CD4-positive, alpha-beta memory T cell (primary cell): ENCODE measurements at regions of chr2 and their contacts with region 1.

Region 1: DNA sequence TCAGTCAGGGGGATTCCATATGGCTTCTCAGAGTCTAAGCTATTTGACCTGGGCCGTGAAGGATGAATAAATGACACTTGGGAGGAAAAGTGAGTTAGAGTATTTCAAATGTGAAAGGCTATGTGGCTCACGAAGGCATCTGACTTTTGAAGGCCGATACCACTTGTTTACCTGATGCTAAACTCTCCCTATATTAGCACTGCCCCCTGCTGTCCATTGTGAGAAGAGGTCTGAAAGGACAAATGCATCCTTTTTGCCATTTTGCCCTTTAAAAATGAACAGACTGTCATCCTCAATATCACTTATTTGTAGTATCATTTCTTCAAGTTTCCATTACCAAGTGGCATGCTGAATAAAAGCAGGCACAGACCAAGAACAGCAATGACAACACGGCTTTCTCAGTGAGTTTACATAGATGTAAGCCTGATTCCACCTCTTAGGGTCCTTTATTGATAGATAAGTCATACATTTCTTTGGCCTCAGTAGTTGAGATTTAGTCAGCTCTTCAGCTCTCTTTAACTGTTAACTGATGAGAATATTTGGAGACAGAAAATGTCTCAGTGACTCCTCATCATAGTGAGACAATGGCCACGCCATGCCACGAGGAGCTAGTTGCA is 40.1 kb downstream of the DOCK10 start:
- DNase-seq: peak; percentile 67 to 77 (median 69)
- H3K4me3 ChIP-seq: no peak overlapping the region
- H3K4me3 Mint-ChIP-seq: peak overlapping the region in 5 of 8 donors; percentile 35 to 64 (median 48)
- H3K27ac ChIP-seq: peak overlapping the region; percentile 34
- H3K27ac Mint-ChIP-seq: peak overlapping the region; percentile 57 to 85 (median 75)
- H3K4me1 ChIP-seq: peaks cover 71% of the 10 kb centered on the region
- H3K4me1 Mint-ChIP-seq: peaks cover 46 to 93% (median 80%) of the 10 kb centered on the region in 4 donors
- H3K27me3 ChIP-seq: no peaks in the 10 kb centered on the region
- H3K27me3 Mint-ChIP-seq: no peaks in the 10 kb centered on the region

Region 2: DNA sequence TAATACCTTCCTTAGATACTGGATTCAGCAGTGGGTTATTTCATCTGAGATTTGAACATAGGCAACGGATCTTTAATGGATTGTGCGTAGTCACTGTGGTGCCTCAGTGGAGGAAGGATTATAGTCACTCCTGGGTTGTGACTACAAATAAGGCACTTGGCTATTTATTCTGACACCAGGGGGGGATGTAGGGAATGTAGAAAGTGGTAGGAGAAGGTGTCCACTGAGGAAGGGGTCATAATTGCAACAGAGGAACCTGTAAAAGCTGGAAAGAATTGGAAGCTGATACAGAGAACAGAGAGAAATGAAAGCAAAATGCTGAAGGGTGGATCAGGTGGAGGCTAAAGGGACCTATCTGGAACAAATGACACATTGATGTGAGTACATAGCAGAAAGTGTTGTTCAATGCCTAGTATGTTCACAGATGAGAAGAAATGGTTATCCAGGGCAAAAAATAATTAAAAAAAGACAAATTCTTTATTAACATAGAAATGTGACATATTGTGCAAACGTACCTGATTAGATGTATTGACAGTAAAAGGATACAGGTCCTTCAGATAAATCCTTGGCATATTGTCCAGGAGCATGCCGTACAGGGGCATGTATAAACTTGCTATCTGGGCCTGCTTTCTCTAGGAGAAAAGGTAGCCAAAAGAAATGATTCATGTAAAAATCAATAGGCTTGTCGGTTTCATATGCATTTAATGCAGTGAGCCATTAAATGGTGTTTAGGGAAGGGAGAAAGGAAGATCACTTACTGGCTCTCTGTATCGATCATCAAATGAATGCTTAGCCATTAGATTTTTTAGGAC is 194.8 kb before region 1 on chr2:
- CTCF ChIA-PET with region 1: interaction called, 3 read pairs
- POLR2A ChIA-PET with region 1: no interaction called
- intact Hi-C with region 1: loop called (anchors 2 kb)
- DNase-seq: no peak
- H3K4me3 ChIP-seq: no peak overlapping the region
- H3K4me3 Mint-ChIP-seq: no peak overlapping the region
- H3K27ac ChIP-seq: no peak overlapping the region
- H3K27ac Mint-ChIP-seq: peak overlapping the region in 4 of 7 donors; percentile 2 to 49 (median 12)
- H3K4me1 ChIP-seq: no peaks in the 10 kb centered on the region
- H3K4me1 Mint-ChIP-seq: peaks cover 0 to 4% (median 3%) of the 10 kb centered on the region in 4 donors
- H3K27me3 ChIP-seq: no peaks in the 10 kb centered on the region
- H3K27me3 Mint-ChIP-seq: no peaks in the 10 kb centered on the region

Region 3: DNA sequence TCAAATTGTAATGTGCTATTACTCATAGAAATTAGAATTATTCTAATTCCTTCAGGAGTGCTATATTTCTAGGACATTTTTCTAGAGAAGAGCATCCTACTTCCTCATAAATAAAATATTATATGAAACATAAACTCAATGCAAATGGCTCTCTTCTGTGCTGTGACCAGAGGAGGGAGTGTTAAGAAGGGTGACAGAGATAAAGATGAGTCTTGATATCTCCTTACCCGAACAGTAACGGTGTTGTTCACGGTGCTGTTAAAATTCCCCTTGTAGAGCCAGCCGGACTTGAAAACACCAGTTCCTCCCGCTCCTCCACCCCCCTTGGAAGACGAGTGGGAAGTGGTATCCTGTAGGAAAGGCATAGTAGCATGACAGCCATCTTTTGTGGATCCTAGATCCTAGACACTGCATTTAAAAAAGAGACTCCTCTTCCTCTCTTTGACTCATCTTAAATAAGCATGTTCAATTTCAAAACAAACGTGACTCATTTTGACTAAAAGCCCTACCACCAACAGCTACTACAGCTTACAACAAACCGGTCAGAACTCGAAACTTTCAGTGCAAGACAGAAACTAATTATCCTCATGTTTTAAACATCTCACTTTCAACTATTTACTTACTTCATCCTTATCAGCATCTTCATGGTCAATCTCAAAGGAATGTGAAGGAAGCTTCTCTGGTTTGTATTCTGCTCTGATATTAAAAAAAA is 116.2 kb before region 1 on chr2:
- CTCF ChIA-PET with region 1: interaction called, 34 read pairs
- POLR2A ChIA-PET with region 1: no interaction called
- intact Hi-C with region 1: loop called (anchors 1 kb)
- DNase-seq: no peak
- H3K4me3 ChIP-seq: no peak overlapping the region
- H3K4me3 Mint-ChIP-seq: peak overlapping the region in 1 of 8 donors; percentile 7
- H3K27ac ChIP-seq: peak overlapping the region; percentile 9
- H3K27ac Mint-ChIP-seq: peak overlapping the region; percentile 57 to 81 (median 67)
- H3K4me1 ChIP-seq: peaks cover 29% of the 10 kb centered on the region
- H3K4me1 Mint-ChIP-seq: peaks cover 45 to 72% (median 53%) of the 10 kb centered on the region in 4 donors
- H3K27me3 ChIP-seq: no peaks in the 10 kb centered on the region
- H3K27me3 Mint-ChIP-seq: no peaks in the 10 kb centered on the region

Region 4: GRCh38 chr2:224938651-224939182 is 63.4 kb before region 1 on chr2:
- CTCF ChIA-PET with region 1: interaction called, 92 read pairs
- POLR2A ChIA-PET with region 1: interaction called, 4 read pairs
- intact Hi-C with region 1: no loop called
- DNase-seq: peak in 1 of 5 donors; percentile 66
- H3K4me3 ChIP-seq: peak overlapping the region in 1 of 2 donors; percentile 3
- H3K4me3 Mint-ChIP-seq: peak overlapping the region; percentile 13 to 79 (median 66)
- H3K27ac ChIP-seq: peak overlapping the region; percentile 44
- H3K27ac Mint-ChIP-seq: peak overlapping the region; percentile 69 to 94 (median 83)
- H3K4me1 ChIP-seq: peaks cover 94% of the 10 kb centered on the region
- H3K4me1 Mint-ChIP-seq: peaks cover 62 to 90% (median 75%) of the 10 kb centered on the region in 4 donors
- H3K27me3 ChIP-seq: no peaks in the 10 kb centered on the region
- H3K27me3 Mint-ChIP-seq: no peaks in the 10 kb centered on the region

Region 5: GRCh38 chr2:225041851-225042799 is 40.0 kb after region 1 on chr2 and contains the start of gene DOCK10:
- CTCF ChIA-PET with region 1: interaction called, 11 read pairs
- POLR2A ChIA-PET with region 1: interaction called, 3 read pairs
- intact Hi-C with region 1: loop called (anchors 1 kb)
- DNase-seq: peak; percentile 60 to 75 (median 63)
- H3K4me3 ChIP-seq: peak within 1 kb of the TSS; percentile 32 to 94
- H3K4me3 Mint-ChIP-seq: peak within 1 kb of the TSS; percentile 94 to 100 (median 98)
- H3K27ac ChIP-seq: peak within 1 kb of the TSS; percentile 91
- H3K27ac Mint-ChIP-seq: peak within 1 kb of the TSS; percentile 94 to 99 (median 97)
- H3K4me1 ChIP-seq: peaks cover 52% of the 10 kb centered on the region
- H3K4me1 Mint-ChIP-seq: peaks cover 44 to 62% (median 53%) of the 10 kb centered on the region in 4 donors
- H3K27me3 ChIP-seq: no peaks in the 10 kb centered on the region
- H3K27me3 Mint-ChIP-seq: no peaks in the 10 kb centered on the region
- total RNA-seq, gene DOCK10: 180 to 186 TPM